ENCODE measurements at regions of chr11 and their contacts with region 1.

Region 1: DNA sequence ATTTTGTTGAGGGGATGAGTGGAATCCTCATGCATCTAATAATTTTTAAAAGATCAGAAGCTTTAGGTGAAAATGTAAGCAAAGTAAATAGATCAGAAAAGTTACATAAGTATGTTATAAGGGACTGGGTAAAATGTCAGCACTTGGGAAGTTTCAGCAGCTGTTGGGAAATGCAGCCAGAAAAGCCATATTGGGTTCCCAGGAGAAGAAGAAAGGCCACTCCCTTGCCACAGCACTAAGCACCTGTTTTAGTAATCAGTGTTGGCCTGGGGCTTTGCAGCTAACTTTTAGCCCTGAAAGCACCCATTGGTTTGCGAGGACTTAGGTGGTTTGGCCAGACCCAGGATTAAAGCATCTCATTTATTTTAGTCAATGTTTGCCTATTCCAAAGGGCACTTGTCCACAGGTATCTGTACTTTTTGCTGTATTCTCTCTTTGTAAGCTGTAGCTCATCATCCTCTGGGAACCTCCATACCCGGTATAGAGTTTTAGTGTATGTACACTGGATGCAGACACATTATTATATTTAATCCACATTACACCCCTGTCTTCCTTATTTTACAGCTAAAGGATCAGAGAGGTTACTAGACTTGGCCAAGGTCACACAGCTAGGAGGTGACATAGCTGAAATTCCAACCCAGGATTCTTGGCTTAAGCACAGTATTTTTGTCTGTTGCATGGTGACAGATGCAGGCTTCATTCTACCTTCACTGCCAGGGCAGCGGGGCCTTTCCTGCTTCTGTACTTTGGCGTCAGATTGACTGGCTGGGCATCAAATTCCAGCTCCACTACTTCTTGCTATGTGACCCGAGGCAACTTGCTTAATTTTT is 127.7 kb upstream of the SESN3 start:
- DNase-seq: no peak
- H3K4me3 ChIP-seq: no peak overlapping the region
- H3K27ac ChIP-seq: no peak overlapping the region
- H3K4me1 ChIP-seq: peaks cover 20% of the 10 kb centered on the region
- H3K27me3 ChIP-seq: no peaks in the 10 kb centered on the region
- CTCF ChIP-seq: no peak
- POLR2A ChIP-seq: no peak

Region 2: GRCh38 chr11:95330302-95330701 is 28.4 kb before region 1 on chr11:
- intact Hi-C with region 1: no loop called
- DNase-seq: no peak
- H3K4me3 ChIP-seq: no peak overlapping the region
- H3K27ac ChIP-seq: no peak overlapping the region
- H3K4me1 ChIP-seq: no peaks in the 10 kb centered on the region
- H3K27me3 ChIP-seq: no peaks in the 10 kb centered on the region
- CTCF ChIP-seq: no peak
- POLR2A ChIP-seq: no peak

Region 3: DNA sequence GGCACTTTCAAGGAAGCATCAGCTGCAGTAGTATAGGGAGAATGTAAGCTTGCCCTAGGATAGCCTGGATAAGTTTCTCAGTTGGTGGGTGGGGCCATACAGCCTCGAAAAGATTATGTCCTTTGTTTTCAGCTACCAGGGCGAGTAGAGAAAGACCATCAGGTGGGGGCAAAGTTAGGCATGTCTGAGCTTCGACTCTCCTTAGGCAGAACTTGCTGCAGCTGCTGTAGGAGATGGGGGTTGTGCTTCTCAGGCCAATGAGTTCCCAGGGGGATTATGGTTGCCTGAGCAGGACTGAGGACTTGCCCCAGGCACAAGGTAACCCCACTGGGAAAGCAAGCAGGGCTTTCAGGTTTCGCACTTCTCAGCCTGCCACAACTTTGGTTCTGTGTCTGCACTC is 45.6 kb after region 1 on chr11:
- intact Hi-C with region 1: loop called (anchors 2 kb)
- DNase-seq: no peak
- H3K4me3 ChIP-seq: no peak overlapping the region
- H3K27ac ChIP-seq: no peak overlapping the region
- H3K4me1 ChIP-seq: no peaks in the 10 kb centered on the region
- H3K27me3 ChIP-seq: no peaks in the 10 kb centered on the region
- CTCF ChIP-seq: no peak
- POLR2A ChIP-seq: no peak

Region 4: GRCh38 chr11:95652002-95652472 is 293.3 kb after region 1 on chr11:
- intact Hi-C with region 1: no loop called
- DNase-seq: no peak
- H3K4me3 ChIP-seq: no peak overlapping the region
- H3K27ac ChIP-seq: no peak overlapping the region
- H3K4me1 ChIP-seq: peaks cover 10% of the 10 kb centered on the region
- H3K27me3 ChIP-seq: no peaks in the 10 kb centered on the region
- CTCF ChIP-seq: no peak
- POLR2A ChIP-seq: no peak

Measured in vagina (tissue), 2 donors.